Natural killer cell (primary cell): ENCODE measurements at regions of chr22 and their contacts with region 1.

Region 1: DNA sequence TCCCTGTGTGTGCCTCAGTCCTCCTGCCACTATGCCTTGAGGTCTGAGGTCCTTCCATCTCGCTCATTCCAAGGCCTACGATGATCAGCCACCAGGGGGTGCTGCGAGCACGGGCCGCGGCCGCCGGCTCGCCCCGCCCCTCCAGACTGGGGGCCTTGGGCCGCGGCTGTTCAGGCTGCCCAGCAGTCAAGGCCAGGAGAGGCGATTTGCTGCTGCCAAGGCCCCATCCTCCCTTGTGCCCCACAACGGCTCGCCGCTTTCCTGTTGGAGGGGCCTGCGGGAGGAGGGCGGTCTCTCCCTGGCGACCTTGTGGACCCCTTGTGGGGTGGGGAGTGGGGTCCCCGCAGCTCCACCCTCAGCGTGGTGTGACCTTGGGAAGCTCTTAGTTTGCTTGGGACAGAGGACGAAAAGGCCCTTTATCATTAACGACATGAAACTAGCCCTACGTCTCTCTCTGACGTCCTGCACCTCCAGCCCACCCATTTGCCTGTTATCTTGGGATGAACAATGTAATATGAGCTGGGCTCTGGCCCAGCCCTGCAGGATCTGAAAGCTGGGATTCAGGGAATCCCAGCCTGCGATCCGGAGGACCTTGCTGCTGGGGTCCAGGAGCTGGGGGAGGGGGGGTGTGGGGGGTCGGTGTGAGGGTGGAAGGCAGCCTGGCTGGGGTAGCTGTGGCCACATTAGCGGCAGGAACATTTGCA is 5.3 kb upstream of the GALR3 start:
- DNase-seq: peak; percentile 85 to 87
- ATAC-seq: peak; percentile 84 to 88 (median 87)
- H3K4me3 ChIP-seq: no peak overlapping the region
- H3K4me3 Mint-ChIP-seq: peak overlapping the region; percentile 58
- H3K27ac ChIP-seq: no peak overlapping the region
- H3K27ac Mint-ChIP-seq: no peak overlapping the region
- H3K4me1 ChIP-seq: peaks cover 21% of the 10 kb centered on the region
- H3K4me1 Mint-ChIP-seq: peaks cover 0 to 14% of the 10 kb centered on the region in 2 donors
- H3K27me3 ChIP-seq: no peaks in the 10 kb centered on the region
- H3K27me3 Mint-ChIP-seq: peaks cover 0 to 17% of the 10 kb centered on the region in 2 donors
- CTCF ChIP-seq: peak; percentile 87

Region 2: DNA sequence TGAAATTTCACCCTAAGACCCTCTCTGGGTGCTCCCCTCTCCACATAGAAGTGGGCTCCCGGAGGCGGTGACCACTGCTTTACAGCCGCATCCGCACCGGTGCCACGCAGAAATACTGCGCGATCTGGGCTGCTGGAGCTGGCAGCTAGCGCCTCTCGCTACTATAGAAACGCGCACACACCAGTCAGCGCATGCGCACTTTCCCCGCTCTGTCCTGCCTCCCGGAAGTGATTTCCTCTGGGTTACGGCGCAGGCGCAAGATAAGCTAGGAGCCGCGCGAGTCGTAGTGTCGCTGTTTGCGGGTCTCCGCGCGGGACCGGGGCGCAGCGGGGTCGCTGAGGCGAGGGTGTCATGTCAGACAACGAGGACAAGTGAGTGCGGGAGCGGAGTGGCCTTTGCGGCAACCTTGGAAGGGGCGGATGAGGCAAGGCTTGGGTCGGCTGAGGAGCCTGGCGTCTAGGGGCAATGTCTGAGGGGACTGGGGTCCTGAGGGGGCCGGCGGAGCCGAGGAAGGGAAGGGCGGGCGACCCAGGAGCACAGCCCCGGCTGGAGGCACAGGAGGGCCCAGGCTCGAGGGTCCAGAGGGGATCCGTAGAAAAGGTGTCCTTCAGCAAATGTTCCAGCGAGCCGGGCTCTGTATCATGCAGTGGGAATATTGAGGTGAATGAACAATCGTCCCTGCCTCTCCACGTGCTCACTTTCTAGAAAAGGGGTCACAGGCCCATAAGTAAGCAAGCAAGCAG is 135.8 kb after region 1 on chr22 and contains the starts of genes C22orf23 and POLR2F:
- intact Hi-C with region 1: loop called (anchors 5 kb)
- DNase-seq: peak; percentile 94 to 100
- ATAC-seq: peak; percentile 94 to 95 (median 95)
- H3K4me3 ChIP-seq: peak within 1 kb of the TSS; percentile 78
- H3K4me3 Mint-ChIP-seq: peak within 1 kb of the TSS; percentile 93
- H3K27ac ChIP-seq: peak within 1 kb of the TSS; percentile 40
- H3K27ac Mint-ChIP-seq: peak within 1 kb of the TSS; percentile 83 to 94
- H3K4me1 ChIP-seq: peaks cover 20% of the 10 kb centered on the region
- H3K4me1 Mint-ChIP-seq: peaks cover 25 to 43% of the 10 kb centered on the region in 2 donors
- H3K27me3 ChIP-seq: peaks cover 6% of the 10 kb centered on the region
- H3K27me3 Mint-ChIP-seq: peaks cover 7 to 10% of the 10 kb centered on the region in 2 donors
- CTCF ChIP-seq: no peak
- total RNA-seq, gene C22orf23: not detected
- total RNA-seq, gene POLR2F: 38.7 to 40.6 (median 38.8) TPM

Region 3: GRCh38 chr22:37965940-37966664 is 148.2 kb after region 1 on chr22:
- intact Hi-C with region 1: loop called (anchors 1 kb)
- DNase-seq: no peak
- ATAC-seq: no peak
- H3K4me3 ChIP-seq: no peak overlapping the region
- H3K4me3 Mint-ChIP-seq: no peak overlapping the region
- H3K27ac ChIP-seq: no peak overlapping the region
- H3K27ac Mint-ChIP-seq: no peak overlapping the region
- H3K4me1 ChIP-seq: peaks cover 4% of the 10 kb centered on the region
- H3K4me1 Mint-ChIP-seq: peaks cover 16 to 23% of the 10 kb centered on the region in 2 donors
- H3K27me3 ChIP-seq: no peaks in the 10 kb centered on the region
- H3K27me3 Mint-ChIP-seq: no peaks in the 10 kb centered on the region
- CTCF ChIP-seq: no peak

Region 4: DNA sequence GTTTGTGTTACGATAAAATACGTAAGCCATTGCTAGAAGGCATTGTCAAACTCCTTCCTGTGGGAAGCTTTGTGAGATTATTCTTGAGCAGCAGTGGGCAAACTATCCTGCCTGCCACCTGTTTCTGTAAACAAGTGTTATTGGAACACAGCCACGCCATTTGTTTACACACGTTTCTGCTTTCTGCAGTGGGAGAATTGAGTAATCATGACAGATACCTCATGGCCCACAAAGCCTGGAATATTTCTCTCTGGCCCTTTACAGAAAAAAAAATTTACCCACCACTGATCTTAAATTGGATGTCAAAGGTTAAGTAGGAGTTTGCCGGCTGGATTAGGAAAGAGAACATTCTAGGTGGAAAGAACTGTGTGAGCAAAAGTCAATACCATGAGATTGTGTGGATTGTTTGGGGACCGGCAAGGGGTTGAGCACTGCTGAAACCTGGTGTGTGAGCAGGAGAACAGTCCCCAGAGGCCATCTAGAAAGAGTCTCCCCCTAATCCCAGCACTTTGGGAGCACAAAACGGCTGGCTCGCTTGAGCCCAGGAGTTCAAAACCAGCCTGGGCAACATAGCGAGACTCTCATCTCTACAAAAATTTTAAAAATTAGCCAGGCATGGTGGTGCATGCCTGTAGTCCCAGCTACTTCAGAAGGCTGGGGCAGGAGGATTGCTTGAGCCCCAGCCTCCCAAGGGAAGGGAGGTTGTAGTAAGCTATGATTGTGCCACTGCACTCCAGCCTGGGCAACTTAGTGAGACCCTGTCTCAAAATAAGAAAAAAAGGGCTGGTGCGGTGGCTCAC is 369.8 kb after region 1 on chr22:
- intact Hi-C with region 1: no loop called
- DNase-seq: no peak
- ATAC-seq: no peak
- H3K4me3 ChIP-seq: no peak overlapping the region
- H3K4me3 Mint-ChIP-seq: no peak overlapping the region
- H3K27ac ChIP-seq: no peak overlapping the region
- H3K27ac Mint-ChIP-seq: no peak overlapping the region
- H3K4me1 ChIP-seq: peaks cover 4% of the 10 kb centered on the region
- H3K4me1 Mint-ChIP-seq: peaks cover 0 to 6% of the 10 kb centered on the region in 2 donors
- H3K27me3 ChIP-seq: no peaks in the 10 kb centered on the region
- H3K27me3 Mint-ChIP-seq: peaks cover 0 to 3% of the 10 kb centered on the region in 2 donors
- CTCF ChIP-seq: no peak